Left colon (tissue), 2 donors: ENCODE measurements at regions of chr16 and their contacts with region 1.

Region 1: DNA sequence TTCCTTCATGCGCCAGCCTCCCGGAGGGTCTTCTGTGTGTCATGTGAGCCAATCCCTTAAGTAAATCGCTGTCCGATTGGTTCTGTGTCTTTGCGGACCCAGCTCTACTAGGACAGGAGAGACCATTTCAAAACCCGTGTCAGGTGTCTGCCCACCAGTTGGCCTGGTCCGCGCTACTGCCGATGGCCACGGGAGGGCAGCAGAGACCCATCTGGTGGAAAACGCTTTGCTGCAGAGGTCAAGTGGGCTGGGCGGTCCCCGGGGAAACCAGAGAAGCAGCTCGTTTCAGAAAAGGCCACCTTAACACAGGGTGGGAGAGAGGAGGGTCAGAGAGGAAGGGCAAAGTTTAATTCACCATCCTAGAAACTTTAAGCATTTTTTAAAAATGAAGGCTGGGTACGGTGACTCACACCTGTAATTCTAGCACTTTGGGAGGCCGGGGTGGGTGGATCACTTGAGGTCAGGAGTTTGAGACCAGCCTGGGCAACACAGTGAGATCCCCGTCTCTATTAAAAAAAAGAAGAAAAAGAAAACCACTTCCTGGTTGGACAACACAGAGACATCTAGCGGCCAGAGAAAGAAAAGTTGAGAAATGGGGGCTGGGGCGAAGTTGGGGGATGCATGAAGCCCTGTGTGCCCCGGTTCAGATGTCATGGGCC is 2.8 kb upstream of the CIBAR2 start:
- DNase-seq: peak; percentile 79 to 91
- ATAC-seq: peak; percentile 92

Region 2: DNA sequence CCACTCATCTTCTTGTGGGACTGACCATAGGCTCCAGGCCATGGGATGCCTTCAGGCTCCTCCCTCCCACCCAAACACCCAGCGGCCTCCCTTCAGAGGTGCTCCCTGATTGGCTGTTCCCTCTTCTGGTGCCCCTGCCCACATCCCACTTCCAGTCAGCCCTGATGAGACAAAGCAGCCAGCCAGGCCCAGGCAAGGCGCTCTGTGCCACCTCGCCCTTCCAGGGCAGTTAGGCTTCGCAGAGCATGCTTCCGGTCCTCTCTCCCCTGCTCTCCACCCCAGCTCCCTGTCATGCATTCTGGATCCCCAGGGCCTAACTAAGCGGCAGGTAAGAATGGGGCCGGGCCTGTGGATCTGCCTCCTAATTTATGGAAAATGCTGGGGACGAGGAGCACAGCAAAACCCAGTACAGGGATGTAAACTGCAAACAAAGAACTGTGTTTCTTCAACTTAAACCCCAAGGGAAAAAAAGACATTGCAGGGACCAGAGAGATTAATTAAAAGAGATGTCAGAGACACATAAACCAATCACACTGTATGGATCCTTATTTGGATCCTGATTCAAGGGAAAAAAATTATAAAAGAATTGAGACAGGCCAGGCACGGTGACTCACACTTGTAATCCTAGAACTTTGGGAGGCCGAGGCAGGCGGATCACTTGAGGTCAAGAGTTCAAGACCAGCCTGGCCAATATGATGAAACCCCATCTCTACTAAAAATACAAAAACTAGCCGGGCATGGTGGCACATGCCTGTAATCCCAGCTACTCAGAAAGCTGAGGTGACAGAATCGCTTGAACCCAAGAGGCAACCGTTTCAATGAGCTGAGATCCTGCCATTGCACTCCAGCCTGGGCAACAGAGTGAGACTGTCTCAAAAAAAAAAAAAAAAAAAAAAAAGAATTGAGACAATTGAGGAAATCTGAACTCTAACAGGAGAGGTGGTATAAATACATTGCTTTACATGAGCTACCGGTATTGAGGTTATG is 129.7 kb before region 1 on chr16:
- intact Hi-C with region 1: no loop called
- DNase-seq: no peak
- ATAC-seq: no peak

Region 3: DNA sequence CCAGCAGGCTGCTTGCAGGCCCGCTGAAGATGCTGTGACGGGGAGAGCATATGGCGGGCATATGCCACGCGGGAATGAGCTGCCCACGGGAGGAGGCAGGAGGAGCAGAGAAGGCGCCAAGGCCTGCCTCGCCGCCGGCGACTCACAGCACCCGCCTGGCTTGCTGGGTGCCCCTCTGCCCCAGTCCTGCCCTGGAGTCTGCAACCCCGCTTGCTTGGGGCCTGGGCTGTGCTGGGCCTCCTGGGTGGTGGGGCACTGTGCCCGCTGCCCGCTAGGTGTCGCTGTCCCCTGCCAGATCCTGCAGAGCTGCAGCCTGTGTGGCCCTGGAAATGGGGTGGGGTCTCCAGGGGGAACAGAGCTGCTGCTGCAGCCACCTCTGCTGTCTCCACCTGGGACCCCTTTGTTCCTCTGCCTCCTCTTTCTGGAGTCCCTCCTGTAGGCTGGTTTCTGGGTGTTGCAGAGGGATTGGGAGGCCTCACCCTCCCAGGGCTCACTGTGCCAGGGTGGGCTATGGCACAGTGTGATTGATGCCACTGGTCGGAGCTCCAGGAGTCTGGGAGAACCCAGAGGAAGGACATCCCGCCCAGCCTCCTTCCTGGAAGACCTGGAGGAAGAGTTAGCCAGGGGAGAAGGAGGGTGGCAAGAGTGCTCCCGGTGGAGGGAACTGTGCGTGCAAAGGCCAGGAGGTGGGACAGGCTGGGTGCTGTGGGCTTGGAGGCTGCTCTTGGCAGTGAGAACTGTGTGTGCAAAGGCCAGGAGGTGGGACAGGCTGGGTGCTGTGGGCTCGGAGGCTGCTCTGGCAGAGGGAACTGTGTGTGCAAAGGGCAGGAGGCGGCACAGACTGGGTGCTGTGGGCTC is 138.3 kb after region 1 on chr16:
- intact Hi-C with region 1: loop called (anchors 10 kb)
- DNase-seq: peak in 1 of 2 donors; percentile 65
- ATAC-seq: peak; percentile 83